Uterus (tissue), 4 donors: ENCODE measurements at regions of chr4 and their contacts with region 1.

Region 1: DNA sequence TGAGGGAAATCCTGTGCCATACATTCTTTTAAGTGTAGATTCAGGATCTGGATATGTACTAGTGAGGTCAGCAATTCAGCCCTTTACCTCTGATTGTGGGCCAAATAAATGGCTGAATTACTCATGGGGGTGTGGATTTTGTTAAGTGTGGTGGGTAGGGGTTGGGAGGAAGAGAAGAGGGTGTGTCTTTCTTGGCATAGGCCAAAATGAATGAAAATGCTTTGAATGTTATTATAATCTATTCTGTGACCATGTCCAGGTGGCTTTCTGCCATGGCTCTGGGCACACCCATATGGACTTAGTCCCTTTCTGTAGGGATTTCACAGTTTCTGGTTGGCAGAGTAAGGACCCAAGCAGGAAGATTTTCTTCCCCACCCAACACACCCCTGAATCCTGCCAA is 244.3 kb downstream of the CBR4 start:
- DNase-seq: no peak
- H3K4me3 ChIP-seq: no peak overlapping the region
- H3K27ac ChIP-seq: peak overlapping the region; percentile 79 to 90
- H3K4me1 ChIP-seq: peaks cover 0 to 6% of the 10 kb centered on the region in 2 donors
- H3K27me3 ChIP-seq: no peaks in the 10 kb centered on the region
- CTCF ChIP-seq: no peak
- POLR2A ChIP-seq: no peak

Region 2: DNA sequence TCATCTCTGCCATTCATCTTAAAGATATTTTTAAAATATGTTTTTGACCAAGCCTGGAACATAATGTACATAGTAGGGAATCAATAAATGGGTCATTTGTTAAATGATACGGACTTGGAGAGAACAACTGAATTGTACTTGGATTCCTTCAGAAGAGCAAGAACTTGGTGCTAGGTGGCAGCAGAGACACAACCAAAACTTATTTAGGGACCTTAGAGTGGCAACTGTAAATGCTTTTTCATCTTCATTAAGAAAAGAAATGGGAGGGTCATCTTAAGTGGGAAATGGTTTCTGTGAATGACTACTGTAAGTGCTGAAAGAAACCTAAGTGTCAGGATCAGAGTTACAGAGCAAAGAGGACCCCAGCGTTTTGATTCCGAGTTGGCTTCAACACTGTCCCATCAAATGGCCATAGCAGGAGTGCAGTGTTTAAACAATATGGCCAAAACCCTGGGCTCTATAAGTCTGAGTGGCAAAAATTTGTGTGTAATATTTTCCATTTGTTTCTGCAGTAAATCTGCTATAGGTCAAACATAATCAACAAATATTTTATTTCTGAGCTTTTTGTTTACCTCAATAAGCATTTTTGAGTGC is 55.3 kb before region 1 on chr4:
- intact Hi-C with region 1: loop called (anchors 10 kb)
- DNase-seq: peak; percentile 49 to 64
- H3K4me3 ChIP-seq: no peak overlapping the region
- H3K27ac ChIP-seq: peak overlapping the region; percentile 74 to 76
- H3K4me1 ChIP-seq: peaks cover 0 to 3% of the 10 kb centered on the region in 2 donors
- H3K27me3 ChIP-seq: no peaks in the 10 kb centered on the region
- CTCF ChIP-seq: peak; percentile 59 to 82 (median 70)
- POLR2A ChIP-seq: no peak

Region 3: GRCh38 chr4:168831919-168832762 is 66.4 kb after region 1 on chr4:
- intact Hi-C with region 1: loop called (anchors 5 kb)
- DNase-seq: peak; percentile 89 to 93
- H3K4me3 ChIP-seq: peak overlapping the region; percentile 62 to 98
- H3K27ac ChIP-seq: peak overlapping the region; percentile 98 to 99
- H3K4me1 ChIP-seq: no peaks in the 10 kb centered on the region
- H3K27me3 ChIP-seq: no peaks in the 10 kb centered on the region
- CTCF ChIP-seq: peak in 1 of 4 experiments; percentile 22
- POLR2A ChIP-seq: peak; percentile 80 to 98